HepG2 (cell line): ENCODE measurements at regions of chr6 and their contacts with region 1.

Region 1: DNA sequence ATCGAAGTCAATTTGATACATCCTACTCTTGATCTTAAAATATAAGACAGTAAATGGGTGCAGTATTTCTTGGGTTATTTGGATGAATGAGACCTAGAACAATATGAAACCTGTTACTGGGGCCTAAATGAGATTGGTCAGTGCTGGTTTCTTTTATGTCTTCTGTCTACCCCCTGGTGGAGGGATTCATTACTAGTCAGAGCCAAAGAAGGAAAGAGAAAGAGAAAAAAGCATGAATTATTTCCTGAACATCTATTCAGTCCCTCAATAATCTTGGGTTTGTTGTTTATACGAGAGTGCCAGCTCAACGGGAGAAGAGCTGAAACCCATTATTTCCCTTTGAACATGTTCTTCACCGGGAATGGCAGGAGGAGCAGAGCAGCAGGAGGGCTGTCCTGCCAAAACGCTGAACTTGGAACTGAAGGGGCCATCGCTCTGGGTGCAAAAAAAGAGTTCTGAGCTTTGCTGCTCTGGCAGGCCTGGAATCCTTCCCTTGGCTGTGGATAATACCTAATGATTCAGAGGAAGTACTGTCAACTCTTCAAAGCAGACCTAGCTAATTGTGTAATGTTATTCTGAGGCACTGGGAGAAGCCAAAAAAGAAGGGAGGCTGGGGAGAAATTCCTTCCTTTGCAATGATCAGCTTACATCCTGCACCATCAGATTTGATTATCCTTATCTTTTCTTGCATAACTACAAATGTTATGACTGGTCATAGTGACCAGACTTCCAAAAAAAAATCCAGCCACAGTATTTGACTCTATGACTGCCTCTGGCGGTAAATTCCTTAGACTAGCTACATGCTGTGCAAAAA is 72.0 kb downstream of the BLOC1S5 start:
- DNase-seq: peak; percentile 69
- ATAC-seq: peak; percentile 88
- H3K4me3 ChIP-seq: no peak overlapping the region
- H3K27ac ChIP-seq: no peak overlapping the region
- H3K4me1 ChIP-seq: peaks cover 16% of the 10 kb centered on the region; the same call in 1 of the 2 replicates
- H3K27me3 ChIP-seq: no peaks in the 10 kb centered on the region
- CTCF ChIP-seq: peak; percentile 74
- EP300 ChIP-seq: no peak
- POLR2A ChIP-seq: no peak
- RAD21 ChIP-seq: peak; percentile 88

Region 2: GRCh38 chr6:7051233-7052114 is 940.7 kb before region 1 on chr6:
- CTCF ChIA-PET with region 1: no interaction called
- POLR2A ChIA-PET with region 1: no interaction called
- in situ Hi-C with region 1: no loop called
- intact Hi-C with region 1: no loop called
- DNase-seq: no peak
- ATAC-seq: no peak; the same call in 2 of the 3 replicates
- H3K4me3 ChIP-seq: no peak overlapping the region
- H3K27ac ChIP-seq: no peak overlapping the region
- H3K4me1 ChIP-seq: peaks cover 12% of the 10 kb centered on the region
- H3K27me3 ChIP-seq: no peaks in the 10 kb centered on the region; a peak in 1 of 5 replicates
- CTCF ChIP-seq: no peak
- EP300 ChIP-seq: no peak
- POLR2A ChIP-seq: no peak
- RAD21 ChIP-seq: no peak

Region 3: DNA sequence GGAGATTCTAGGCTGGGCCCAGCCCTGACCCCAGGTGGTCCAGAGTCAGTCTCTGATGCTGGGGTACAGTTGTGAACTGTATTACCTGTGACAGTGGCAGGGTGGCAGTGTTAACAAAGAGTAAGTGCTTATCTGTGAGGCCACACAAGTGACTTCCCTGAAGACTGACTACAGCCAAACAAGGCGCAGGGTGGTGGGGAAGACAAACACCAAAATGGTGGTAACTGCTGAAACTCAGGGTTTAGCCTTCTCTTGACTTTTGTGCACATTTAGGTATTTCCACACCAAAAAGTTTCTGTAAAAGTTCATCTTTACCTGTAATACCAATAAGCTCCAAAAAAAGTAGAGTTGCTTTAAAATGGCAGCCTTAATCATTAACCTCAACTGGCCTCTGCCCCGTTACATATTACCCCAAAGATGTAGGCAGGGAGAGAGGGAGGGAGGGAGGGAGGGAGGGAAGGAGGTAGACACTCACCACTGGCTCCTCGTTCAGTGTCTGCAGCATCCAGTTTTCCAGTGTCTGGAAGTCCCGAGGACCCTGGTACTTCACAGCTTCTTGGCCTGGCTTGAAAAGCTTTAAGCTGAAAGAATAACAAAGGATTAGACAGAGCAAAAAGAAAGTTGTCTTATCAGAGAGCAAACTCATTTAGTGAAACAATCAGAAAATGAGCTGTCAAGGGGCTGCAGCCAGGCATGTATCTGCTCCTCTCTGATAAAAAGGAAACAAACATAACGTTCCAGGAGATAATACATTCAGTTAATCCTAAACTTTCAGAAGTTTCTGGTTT is 92.9 kb before region 1 on chr6:
- CTCF ChIA-PET with region 1: interaction called, 19 read pairs
- POLR2A ChIA-PET with region 1: interaction called, 3 read pairs
- in situ Hi-C with region 1: loop called (anchors 5 kb)
- intact Hi-C with region 1: loop called (anchors 1 kb)
- DNase-seq: peak; percentile 50
- ATAC-seq: peak; percentile 72
- H3K4me3 ChIP-seq: no peak overlapping the region
- H3K27ac ChIP-seq: no peak overlapping the region
- H3K4me1 ChIP-seq: peaks cover 25% of the 10 kb centered on the region
- H3K27me3 ChIP-seq: no peaks in the 10 kb centered on the region
- CTCF ChIP-seq: peak; percentile 67
- EP300 ChIP-seq: no peak
- POLR2A ChIP-seq: no peak
- RAD21 ChIP-seq: peak; percentile 67

Region 4: GRCh38 chr6:7974938-7975763 is 17.1 kb before region 1 on chr6:
- CTCF ChIA-PET with region 1: no interaction called
- POLR2A ChIA-PET with region 1: interaction called, 3 read pairs
- in situ Hi-C with region 1: no loop called
- intact Hi-C with region 1: loop called (anchors 1 kb)
- DNase-seq: peak; percentile 100
- ATAC-seq: peak; percentile 97
- H3K4me3 ChIP-seq: peak overlapping the region; percentile 18 to 49 (median 44); a peak in 5 of 6 replicates
- H3K27ac ChIP-seq: peak overlapping the region; percentile 73
- H3K4me1 ChIP-seq: peaks cover 36% of the 10 kb centered on the region
- H3K27me3 ChIP-seq: no peaks in the 10 kb centered on the region
- CTCF ChIP-seq: peak; percentile 31; the same call in 1 of the 2 replicates
- EP300 ChIP-seq: peak; percentile 22 to 94; a peak in 3 of 4 replicates
- POLR2A ChIP-seq: peak in 1 of 2 experiments; percentile 45; a peak in 2 of 4 replicates
- RAD21 ChIP-seq: peak; percentile 35; the same call in 1 of the 2 replicates

Region 5: DNA sequence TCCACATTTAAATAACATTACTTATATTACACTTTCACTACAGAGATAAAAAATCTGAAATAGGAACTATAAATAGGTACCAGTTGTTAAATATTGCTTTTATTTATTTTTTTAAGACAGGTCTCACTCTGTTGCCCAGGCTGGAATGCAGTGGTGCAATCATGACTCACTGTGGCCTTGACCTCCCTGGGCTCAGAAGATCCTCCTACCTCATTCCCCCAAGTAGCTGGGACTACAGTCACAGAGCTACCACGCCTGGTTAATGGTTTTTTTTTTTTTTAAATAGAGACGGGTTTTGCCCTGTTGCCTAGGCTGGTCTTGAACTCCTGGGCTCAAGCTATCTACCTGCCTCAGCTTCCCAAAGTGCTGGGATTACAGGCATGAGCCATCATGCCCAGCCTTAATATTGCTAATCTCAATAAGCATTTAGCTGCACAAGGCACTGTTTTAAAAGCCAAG is 92.9 kb after region 1 on chr6:
- CTCF ChIA-PET with region 1: no interaction called
- POLR2A ChIA-PET with region 1: no interaction called
- in situ Hi-C with region 1: no loop called
- intact Hi-C with region 1: no loop called
- DNase-seq: peak; percentile 97
- ATAC-seq: peak; percentile 96
- H3K4me3 ChIP-seq: peak overlapping the region in 1 of 3 experiments; percentile 4; a peak in 1 of 6 replicates
- H3K27ac ChIP-seq: peak overlapping the region; percentile 85
- H3K4me1 ChIP-seq: peaks cover 64% of the 10 kb centered on the region
- H3K27me3 ChIP-seq: no peaks in the 10 kb centered on the region
- CTCF ChIP-seq: no peak
- EP300 ChIP-seq: peak; percentile 90 to 95
- POLR2A ChIP-seq: no peak
- RAD21 ChIP-seq: no peak; the same call in 1 of the 2 replicates

Region 6: GRCh38 chr6:8627085-8627861 is 635.1 kb after region 1 on chr6:
- CTCF ChIA-PET with region 1: no interaction called
- POLR2A ChIA-PET with region 1: no interaction called
- in situ Hi-C with region 1: no loop called
- intact Hi-C with region 1: no loop called
- DNase-seq: no peak
- ATAC-seq: no peak
- H3K4me3 ChIP-seq: no peak overlapping the region
- H3K27ac ChIP-seq: no peak overlapping the region
- H3K4me1 ChIP-seq: no peaks in the 10 kb centered on the region
- H3K27me3 ChIP-seq: no peaks in the 10 kb centered on the region
- CTCF ChIP-seq: no peak
- EP300 ChIP-seq: no peak
- POLR2A ChIP-seq: no peak
- RAD21 ChIP-seq: no peak